T-cell (primary cell): ENCODE measurements at regions of chr12 and their contacts with region 1.

Region 1: GRCh38 chr12:19546611-19547162 is 107.4 kb downstream of the AEBP2 start:
- DNase-seq: no peak
- ATAC-seq: no peak
- H3K4me3 ChIP-seq: no peak overlapping the region
- H3K4me3 Mint-ChIP-seq: no peak overlapping the region
- H3K27ac ChIP-seq: no peak overlapping the region
- H3K27ac Mint-ChIP-seq: no peak overlapping the region
- H3K4me1 ChIP-seq: no peaks in the 10 kb centered on the region
- H3K4me1 Mint-ChIP-seq: peaks cover 2 to 6% (median 4%) of the 10 kb centered on the region in 3 donors
- H3K27me3 ChIP-seq: no peaks in the 10 kb centered on the region
- H3K27me3 Mint-ChIP-seq: no peaks in the 10 kb centered on the region

Region 2: GRCh38 chr12:19474147-19474546 is 72.5 kb before region 1 on chr12:
- CTCF ChIA-PET with region 1: interaction called in 1 of 2 experiments, 10 read pairs
- POLR2A ChIA-PET with region 1: no interaction called
- DNase-seq: no peak
- ATAC-seq: no peak
- H3K4me3 ChIP-seq: no peak overlapping the region
- H3K4me3 Mint-ChIP-seq: no peak overlapping the region
- H3K27ac ChIP-seq: no peak overlapping the region
- H3K27ac Mint-ChIP-seq: no peak overlapping the region
- H3K4me1 ChIP-seq: peaks cover 0 to 3% of the 10 kb centered on the region in 2 experiments
- H3K4me1 Mint-ChIP-seq: peaks cover 44 to 48% (median 46%) of the 10 kb centered on the region in 3 donors
- H3K27me3 ChIP-seq: no peaks in the 10 kb centered on the region
- H3K27me3 Mint-ChIP-seq: no peaks in the 10 kb centered on the region

Region 3: DNA sequence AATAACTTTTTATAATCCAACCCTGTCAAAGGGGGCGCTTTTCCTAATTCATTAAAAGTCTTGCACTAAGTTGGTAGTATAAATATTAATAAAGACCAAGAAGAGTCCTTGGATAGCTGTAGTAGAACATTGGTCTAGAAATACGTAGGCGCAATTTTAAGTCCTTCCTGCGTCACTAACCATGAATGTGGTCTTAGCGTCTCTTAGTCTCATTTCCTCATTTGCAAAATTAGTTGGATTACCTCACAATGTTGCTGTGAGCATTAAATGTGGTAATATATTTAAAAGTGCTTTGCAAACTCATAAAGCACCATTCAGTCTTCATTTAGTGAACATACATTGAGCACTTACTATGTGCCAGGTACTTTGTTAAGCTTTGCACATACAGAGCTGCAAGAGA is 42.3 kb after region 1 on chr12:
- CTCF ChIA-PET with region 1: no interaction called
- POLR2A ChIA-PET with region 1: no interaction called
- DNase-seq: no peak
- ATAC-seq: no peak
- H3K4me3 ChIP-seq: no peak overlapping the region
- H3K4me3 Mint-ChIP-seq: no peak overlapping the region
- H3K27ac ChIP-seq: no peak overlapping the region
- H3K27ac Mint-ChIP-seq: no peak overlapping the region
- H3K4me1 ChIP-seq: no peaks in the 10 kb centered on the region
- H3K4me1 Mint-ChIP-seq: no peaks in the 10 kb centered on the region
- H3K27me3 ChIP-seq: no peaks in the 10 kb centered on the region
- H3K27me3 Mint-ChIP-seq: no peaks in the 10 kb centered on the region